ENCODE measurements at regions of chr2 and their contacts with region 1.

Region 1: DNA sequence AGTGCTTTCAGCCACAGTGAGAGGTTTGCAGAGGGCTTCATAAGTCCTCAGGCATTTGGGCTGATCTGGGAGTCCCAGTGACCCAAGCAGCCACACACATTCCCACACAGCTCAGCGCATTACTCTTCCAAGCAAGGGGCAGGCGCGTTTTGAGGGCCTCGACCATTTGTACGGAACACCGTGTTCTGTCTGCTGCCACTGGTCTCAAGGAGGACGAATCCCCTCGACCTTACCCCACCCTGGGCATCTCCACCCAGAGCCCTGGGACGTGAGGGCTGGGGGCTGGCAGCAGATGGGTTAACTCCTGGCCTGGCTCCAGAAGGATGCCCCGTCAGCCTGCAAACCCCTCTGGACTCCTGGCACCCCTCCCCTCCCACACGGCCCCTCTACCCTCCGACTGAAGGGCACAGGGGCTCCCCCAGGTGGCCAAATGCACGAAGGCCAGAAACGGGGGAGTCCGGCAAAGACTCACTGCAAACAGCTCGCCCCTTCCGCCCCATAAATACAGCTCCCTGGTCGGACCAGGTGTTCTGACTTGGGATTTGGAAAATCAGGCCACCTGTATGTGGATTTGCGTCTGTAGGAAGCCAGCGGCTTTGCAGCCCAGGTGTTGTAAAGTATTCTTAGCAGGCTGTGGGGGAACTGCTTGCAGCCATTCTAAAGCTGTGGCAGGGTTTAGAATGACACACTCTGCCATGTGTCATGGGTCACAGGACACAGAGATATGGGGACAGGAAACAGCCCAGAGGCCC is 33.6 kb upstream of the PTMA start:
- DNase-seq: peak; percentile 77
- ATAC-seq: peak; percentile 61 to 64

Region 2: DNA sequence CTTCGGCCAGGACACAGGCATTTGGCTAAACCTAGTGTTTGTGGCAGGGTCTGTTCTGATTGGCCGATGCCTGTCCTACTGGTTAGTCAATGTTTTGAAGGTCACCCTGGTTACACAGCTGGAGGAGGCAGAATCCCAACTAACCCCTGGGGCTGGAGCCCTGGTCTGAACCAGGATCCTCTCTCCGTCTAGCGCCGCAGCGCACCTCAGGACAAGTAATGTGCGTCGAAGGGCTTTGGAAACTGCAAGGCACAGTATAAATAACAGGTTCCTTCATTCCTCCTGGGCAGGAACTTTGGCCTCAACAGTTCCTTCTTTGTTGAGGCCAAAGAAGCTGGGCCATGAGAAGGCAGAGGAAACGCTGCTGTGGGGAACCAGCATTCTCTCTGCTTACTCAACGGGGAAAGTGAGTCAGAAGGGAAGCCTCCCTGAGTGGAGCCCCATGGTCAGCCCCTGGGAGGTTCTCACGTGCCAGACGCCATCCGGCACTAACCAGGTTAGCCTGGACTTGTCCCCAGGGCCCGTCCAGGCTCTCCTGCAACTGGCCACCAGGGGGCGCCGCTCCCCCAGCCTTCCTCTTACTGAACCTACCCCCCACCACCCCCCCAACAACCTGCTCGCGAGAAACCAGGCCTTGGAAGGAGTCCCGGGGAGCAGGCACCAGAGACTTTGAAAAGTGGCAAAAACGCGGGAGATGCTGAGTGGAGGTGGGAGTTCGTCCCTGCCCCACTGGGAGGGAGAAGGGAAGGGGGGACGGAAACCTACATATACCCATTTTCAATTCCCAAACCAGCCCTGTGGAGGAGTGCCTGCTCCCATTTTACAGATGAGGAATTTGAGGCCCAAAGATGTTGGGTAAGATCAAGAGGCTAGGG is 62.3 kb before region 1 on chr2:
- intact Hi-C with region 1: loop called (anchors 2 kb)
- DNase-seq: peak; percentile 94
- ATAC-seq: peak; percentile 66 to 69

Region 3: GRCh38 chr2:231648587-231649174 is 26.1 kb before region 1 on chr2:
- intact Hi-C with region 1: loop called in 1 of 2 experiments (anchors 2 kb)
- DNase-seq: peak; percentile 59
- ATAC-seq: peak; percentile 67 to 76

Region 4: GRCh38 chr2:231709981-231710798 is 35.4 kb after region 1 on chr2:
- intact Hi-C with region 1: loop called in 1 of 2 experiments (anchors 2 kb)
- DNase-seq: peak; percentile 82
- ATAC-seq: peak; percentile 22 to 38

Measured in left cardiac atrium (tissue), 4 donors.